ENCODE measurements at regions of chr1 and their contacts with region 1.

Region 1: GRCh38 chr1:245888809-245889208 is 618.3 kb downstream of the SMYD3 start:
- DNase-seq: peak in 2 of 5 donors; percentile 17 to 19
- H3K4me3 ChIP-seq: no peak overlapping the region
- H3K4me3 Mint-ChIP-seq: no peak overlapping the region
- H3K27ac ChIP-seq: no peak overlapping the region
- H3K27ac Mint-ChIP-seq: no peak overlapping the region
- H3K4me1 ChIP-seq: no peaks in the 10 kb centered on the region
- H3K4me1 Mint-ChIP-seq: peaks cover 0 to 7% (median 4%) of the 10 kb centered on the region in 4 donors
- H3K27me3 ChIP-seq: no peaks in the 10 kb centered on the region
- H3K27me3 Mint-ChIP-seq: no peaks in the 10 kb centered on the region

Region 2: DNA sequence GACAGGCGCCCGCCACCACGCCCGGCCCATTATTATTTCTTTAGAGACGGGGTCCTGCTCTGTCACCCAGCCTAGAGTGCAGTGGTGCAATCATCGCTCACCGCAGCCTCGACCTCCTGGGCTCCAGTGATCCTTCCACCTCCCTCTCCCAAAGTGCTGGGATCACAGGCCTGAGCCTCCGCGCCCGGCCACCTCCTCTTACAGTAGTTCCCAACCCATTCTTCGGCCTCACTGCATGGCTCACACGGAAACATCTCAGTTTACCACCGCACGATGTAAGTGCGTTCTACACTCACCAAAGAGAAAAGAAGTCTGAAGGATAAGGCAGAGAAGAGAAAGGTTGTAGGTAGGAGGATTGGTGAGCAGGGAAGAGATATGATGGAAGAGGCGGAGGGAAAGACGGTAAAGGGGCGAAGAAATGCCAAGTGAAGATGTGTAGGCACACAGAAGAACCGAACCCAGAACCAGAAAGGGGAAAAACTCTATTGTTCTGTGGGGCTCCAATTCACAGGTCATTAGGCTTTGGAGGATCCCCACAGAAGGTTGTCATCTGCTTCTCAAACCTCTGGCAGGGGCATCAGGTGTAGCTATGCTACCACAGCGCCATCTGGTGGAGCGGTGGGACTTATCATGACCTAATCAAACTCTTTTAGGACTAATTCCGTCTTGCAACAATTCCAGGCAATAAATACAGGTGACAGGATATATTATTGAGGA is 114.1 kb after region 1 on chr1:
- CTCF ChIA-PET with region 1: interaction called, 38 read pairs
- POLR2A ChIA-PET with region 1: interaction called, 3 read pairs
- intact Hi-C with region 1: loop called (anchors 1 kb)
- DNase-seq: peak; percentile 68 to 77 (median 70)
- H3K4me3 ChIP-seq: no peak overlapping the region
- H3K4me3 Mint-ChIP-seq: no peak overlapping the region
- H3K27ac ChIP-seq: no peak overlapping the region
- H3K27ac Mint-ChIP-seq: no peak overlapping the region
- H3K4me1 ChIP-seq: no peaks in the 10 kb centered on the region
- H3K4me1 Mint-ChIP-seq: no peaks in the 10 kb centered on the region
- H3K27me3 ChIP-seq: no peaks in the 10 kb centered on the region
- H3K27me3 Mint-ChIP-seq: no peaks in the 10 kb centered on the region

Region 3: GRCh38 chr1:246035060-246035541 is 146.3 kb after region 1 on chr1:
- CTCF ChIA-PET with region 1: no interaction called
- POLR2A ChIA-PET with region 1: no interaction called
- intact Hi-C with region 1: no loop called
- DNase-seq: no peak
- H3K4me3 ChIP-seq: no peak overlapping the region
- H3K4me3 Mint-ChIP-seq: no peak overlapping the region
- H3K27ac ChIP-seq: no peak overlapping the region
- H3K27ac Mint-ChIP-seq: no peak overlapping the region
- H3K4me1 ChIP-seq: no peaks in the 10 kb centered on the region
- H3K4me1 Mint-ChIP-seq: no peaks in the 10 kb centered on the region
- H3K27me3 ChIP-seq: no peaks in the 10 kb centered on the region
- H3K27me3 Mint-ChIP-seq: no peaks in the 10 kb centered on the region

Region 4: GRCh38 chr1:246117066-246117791 is 228.4 kb after region 1 on chr1:
- CTCF ChIA-PET with region 1: no interaction called
- POLR2A ChIA-PET with region 1: no interaction called
- intact Hi-C with region 1: loop called (anchors 2 kb)
- DNase-seq: peak; percentile 71 to 83 (median 76)
- H3K4me3 ChIP-seq: no peak overlapping the region
- H3K4me3 Mint-ChIP-seq: peak overlapping the region; percentile 49 to 90 (median 72)
- H3K27ac ChIP-seq: peak overlapping the region; percentile 19
- H3K27ac Mint-ChIP-seq: peak overlapping the region; percentile 70 to 90 (median 86)
- H3K4me1 ChIP-seq: peaks cover 23% of the 10 kb centered on the region
- H3K4me1 Mint-ChIP-seq: peaks cover 6 to 24% (median 10%) of the 10 kb centered on the region in 4 donors
- H3K27me3 ChIP-seq: no peaks in the 10 kb centered on the region
- H3K27me3 Mint-ChIP-seq: no peaks in the 10 kb centered on the region

Region 5: GRCh38 chr1:246450611-246451251 is 561.9 kb after region 1 on chr1:
- CTCF ChIA-PET with region 1: no interaction called
- POLR2A ChIA-PET with region 1: no interaction called
- intact Hi-C with region 1: loop called (anchors 5 kb)
- DNase-seq: peak in 1 of 5 donors; percentile 9
- H3K4me3 ChIP-seq: no peak overlapping the region
- H3K4me3 Mint-ChIP-seq: no peak overlapping the region
- H3K27ac ChIP-seq: no peak overlapping the region
- H3K27ac Mint-ChIP-seq: no peak overlapping the region
- H3K4me1 ChIP-seq: no peaks in the 10 kb centered on the region
- H3K4me1 Mint-ChIP-seq: no peaks in the 10 kb centered on the region
- H3K27me3 ChIP-seq: no peaks in the 10 kb centered on the region
- H3K27me3 Mint-ChIP-seq: no peaks in the 10 kb centered on the region

Measured in CD4-positive, alpha-beta memory T cell (primary cell).